Ovary (tissue), 10 donors: ENCODE measurements at regions of chr1 and their contacts with region 1.

Region 1: DNA sequence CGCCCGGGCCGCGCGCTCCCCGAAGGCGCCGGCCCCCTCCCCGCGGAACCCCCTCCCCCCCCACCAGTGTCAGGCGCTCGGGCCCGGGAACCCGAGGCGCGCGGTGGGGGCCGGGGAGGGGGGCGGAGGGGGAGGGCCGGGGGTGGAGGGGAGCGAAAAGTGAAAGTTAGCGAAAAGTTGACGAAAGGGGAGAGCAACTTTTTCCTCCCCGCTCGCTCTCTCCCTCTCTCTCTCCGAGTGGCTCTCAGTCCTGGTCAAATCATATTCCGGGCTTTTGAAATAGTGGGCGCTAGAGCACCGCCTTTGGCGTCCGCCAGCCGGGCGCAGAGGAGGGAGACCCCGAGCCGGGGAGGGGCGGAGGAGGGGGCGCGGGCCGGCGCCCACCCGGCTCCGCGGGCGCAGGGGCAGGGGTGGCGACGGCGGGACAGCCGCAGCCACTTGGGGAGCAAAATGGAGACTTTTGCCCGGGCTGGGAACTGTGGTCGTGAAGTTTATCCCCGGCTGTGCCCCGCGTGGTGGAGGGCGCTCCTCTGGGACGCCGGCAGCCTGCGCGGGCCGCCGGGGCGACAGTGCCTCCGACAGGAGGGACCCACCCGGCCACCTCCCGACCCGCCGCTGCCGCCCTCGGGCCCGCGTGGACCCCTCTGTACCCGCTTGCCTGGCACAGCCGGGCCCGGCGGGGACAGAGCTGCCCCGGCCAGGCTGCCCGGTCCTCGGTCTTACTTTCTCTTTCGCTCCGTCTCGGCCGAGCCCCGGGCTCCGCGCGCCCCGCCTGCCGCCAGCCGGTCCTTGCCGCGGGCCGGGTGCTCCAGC is 694 bp downstream of the PRDM16 start:
- DNase-seq: peak; percentile 72 to 80 (median 76)
- H3K4me3 ChIP-seq: peak overlapping the region; percentile 58
- H3K27ac ChIP-seq: peak overlapping the region; percentile 90 to 98
- H3K4me1 ChIP-seq: peaks cover 8% of the 10 kb centered on the region
- H3K27me3 ChIP-seq: no peaks in the 10 kb centered on the region
- CTCF ChIP-seq: peak; percentile 24 to 49 (median 36)
- EP300 ChIP-seq: no peak
- POLR2A ChIP-seq: no peak

Region 2: DNA sequence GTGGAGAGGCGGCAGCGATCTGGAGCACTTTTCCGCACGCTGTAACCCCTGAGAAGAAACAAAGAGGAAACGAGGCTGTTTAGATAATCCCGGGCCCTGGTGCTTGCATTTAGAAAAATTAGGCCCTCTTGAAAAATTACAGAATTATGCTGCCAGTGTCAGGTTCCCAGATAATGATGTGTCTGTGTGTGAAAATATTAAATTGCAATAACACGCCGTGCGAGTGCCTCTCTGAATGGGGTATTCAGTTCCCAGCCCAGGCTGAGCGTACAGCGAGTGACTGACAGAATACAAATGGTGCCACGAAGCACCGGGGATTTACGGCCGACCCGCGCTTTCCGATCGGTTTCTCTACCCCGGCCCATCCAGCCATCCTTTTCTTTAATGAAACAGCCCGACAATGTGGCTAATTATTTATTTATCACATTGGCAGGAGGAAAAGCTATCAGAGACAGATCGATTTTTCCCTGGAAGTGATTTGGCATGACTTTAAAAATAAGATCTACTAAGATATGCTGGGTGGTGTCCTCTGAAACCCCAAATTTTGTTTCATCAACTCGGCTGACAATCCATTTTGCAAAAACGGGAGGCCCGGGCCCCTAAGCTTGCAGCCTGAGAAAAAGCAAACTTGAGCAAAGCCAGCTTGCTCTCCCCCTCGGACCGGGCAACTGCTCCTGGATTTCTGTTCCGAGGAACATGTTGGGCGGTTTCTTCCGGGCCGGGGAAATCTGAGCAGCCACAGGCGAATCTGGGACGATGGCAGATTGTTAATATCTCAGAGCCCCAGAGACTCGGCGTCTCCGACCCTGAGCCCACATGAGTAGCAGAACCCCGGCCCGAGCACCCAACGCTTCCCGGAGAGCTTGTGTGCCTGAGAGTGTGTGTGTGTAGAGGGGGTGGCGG is 10.6 kb after region 1 on chr1:
- intact Hi-C with region 1: no loop called
- DNase-seq: no peak
- H3K4me3 ChIP-seq: no peak overlapping the region
- H3K27ac ChIP-seq: no peak overlapping the region
- H3K4me1 ChIP-seq: no peaks in the 10 kb centered on the region
- H3K27me3 ChIP-seq: no peaks in the 10 kb centered on the region
- CTCF ChIP-seq: no peak
- EP300 ChIP-seq: no peak
- POLR2A ChIP-seq: no peak

Region 3: DNA sequence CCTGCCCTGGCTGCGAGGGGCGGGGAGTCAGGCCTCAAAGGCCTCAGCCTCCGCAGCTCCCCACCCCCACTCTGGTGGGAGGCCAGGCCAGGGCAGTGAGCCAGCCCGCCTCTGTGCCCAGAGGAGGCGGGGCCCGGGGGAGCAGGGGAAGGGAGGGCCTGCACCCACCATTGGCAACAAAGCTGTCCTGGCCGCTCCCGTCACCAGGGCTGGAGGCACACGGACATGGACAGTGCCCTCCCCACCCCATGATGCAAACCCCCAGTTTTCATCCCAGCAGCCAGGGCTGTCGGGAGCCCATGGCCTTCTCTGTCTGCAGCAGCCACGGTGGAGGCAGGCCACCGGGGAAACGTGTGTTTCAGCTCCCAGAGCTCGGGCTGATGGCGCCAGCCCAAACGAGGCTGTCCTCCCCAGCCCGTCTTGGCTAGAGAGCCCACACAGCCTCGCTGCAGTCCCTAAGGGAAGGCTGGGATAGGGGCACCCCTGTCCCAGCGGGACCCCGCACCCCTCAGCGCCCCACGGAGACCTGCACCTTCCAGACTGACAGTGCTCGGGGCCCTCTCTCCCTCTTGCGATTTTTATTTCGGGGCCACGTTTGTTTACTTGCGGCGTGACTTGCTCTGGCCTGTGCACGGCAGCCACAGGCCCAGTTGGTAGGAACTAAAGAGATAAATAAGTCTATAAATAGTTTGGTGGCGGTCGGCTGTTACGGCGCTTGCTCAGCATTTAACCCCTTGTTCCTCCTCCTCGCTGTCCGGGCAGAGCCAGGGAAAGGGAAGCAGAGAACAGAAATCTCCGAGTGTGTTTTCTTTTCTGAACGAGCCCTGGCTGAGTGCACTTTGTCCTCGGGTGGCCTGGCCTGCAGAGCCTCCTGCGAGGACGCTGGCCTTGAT is 101.1 kb after region 1 on chr1:
- intact Hi-C with region 1: loop called in 1 of 4 experiments (anchors 5 kb)
- DNase-seq: peak; percentile 88 to 94 (median 94)
- H3K4me3 ChIP-seq: peak overlapping the region; percentile 22
- H3K27ac ChIP-seq: peak overlapping the region; percentile 9 to 79
- H3K4me1 ChIP-seq: peaks cover 22% of the 10 kb centered on the region
- H3K27me3 ChIP-seq: no peaks in the 10 kb centered on the region
- CTCF ChIP-seq: peak in 1 of 3 donors; percentile 2
- EP300 ChIP-seq: no peak
- POLR2A ChIP-seq: peak; percentile 10

Region 4: GRCh38 chr1:3222042-3222692 is 152.5 kb after region 1 on chr1:
- intact Hi-C with region 1: loop called in 1 of 4 experiments (anchors 10 kb)
- DNase-seq: peak in 3 of 5 donors; percentile 27 to 50 (median 45)
- H3K4me3 ChIP-seq: no peak overlapping the region
- H3K27ac ChIP-seq: peak overlapping the region in 1 of 2 donors; percentile 48
- H3K4me1 ChIP-seq: peaks cover 18% of the 10 kb centered on the region
- H3K27me3 ChIP-seq: no peaks in the 10 kb centered on the region
- CTCF ChIP-seq: no peak
- EP300 ChIP-seq: no peak
- POLR2A ChIP-seq: no peak

Region 5: GRCh38 chr1:3283849-3284248 is 214.2 kb after region 1 on chr1:
- intact Hi-C with region 1: loop called (anchors 2 to 5 kb)
- DNase-seq: peak; percentile 56 to 77 (median 72)
- H3K4me3 ChIP-seq: no peak overlapping the region
- H3K27ac ChIP-seq: no peak overlapping the region
- H3K4me1 ChIP-seq: peaks cover 5% of the 10 kb centered on the region
- H3K27me3 ChIP-seq: no peaks in the 10 kb centered on the region
- CTCF ChIP-seq: peak; percentile 67 to 76 (median 68)
- EP300 ChIP-seq: no peak
- POLR2A ChIP-seq: no peak

Region 6: DNA sequence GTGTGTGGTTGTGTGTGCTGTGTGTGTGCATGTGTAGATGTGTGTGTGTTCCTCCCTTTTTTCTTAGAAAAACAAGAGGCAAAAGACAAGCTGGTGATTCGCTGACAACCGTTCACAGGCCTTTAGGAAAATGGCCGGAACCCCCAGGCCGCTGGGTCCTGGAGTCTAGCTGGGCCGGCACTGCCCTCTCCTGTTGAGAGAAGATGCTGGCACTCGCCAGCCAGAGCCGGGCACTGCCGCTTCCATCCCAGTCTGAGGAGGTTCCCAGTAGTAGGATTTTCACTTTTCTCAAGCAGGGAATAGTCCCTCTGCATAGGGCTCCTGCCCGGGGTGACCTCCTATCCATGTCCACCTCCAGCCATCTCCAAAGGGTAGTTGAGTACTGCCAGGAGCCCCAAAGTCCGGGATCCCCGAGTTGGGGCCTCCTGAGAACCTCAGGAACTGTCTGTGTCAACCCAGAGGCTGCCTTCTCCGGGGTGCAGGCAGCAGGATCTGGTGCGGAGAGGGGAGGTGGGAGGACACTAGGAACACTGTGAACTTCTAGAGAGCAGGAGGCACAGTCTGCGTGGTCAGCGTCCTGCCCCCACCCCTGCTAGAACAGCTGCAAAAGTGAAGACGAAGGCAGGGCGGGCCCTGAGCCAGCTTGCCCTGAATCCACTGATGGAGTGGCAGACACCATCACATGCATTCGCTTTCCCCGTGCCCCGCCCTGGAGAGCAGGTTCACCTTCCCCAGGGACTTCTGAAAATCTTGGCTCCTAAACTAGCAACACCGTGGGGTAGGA is 340.6 kb after region 1 on chr1:
- intact Hi-C with region 1: loop called in 2 of 4 experiments (anchors 5 kb)
- DNase-seq: peak; percentile 58 to 83 (median 70)
- H3K4me3 ChIP-seq: no peak overlapping the region
- H3K27ac ChIP-seq: no peak overlapping the region
- H3K4me1 ChIP-seq: peaks cover 2% of the 10 kb centered on the region
- H3K27me3 ChIP-seq: no peaks in the 10 kb centered on the region
- CTCF ChIP-seq: peak; percentile 27 to 65 (median 50)
- EP300 ChIP-seq: no peak
- POLR2A ChIP-seq: no peak

Region 7: GRCh38 chr1:5029136-5029535 is 1959.4 kb after region 1 on chr1:
- intact Hi-C with region 1: no loop called
- DNase-seq: no peak
- H3K4me3 ChIP-seq: no peak overlapping the region
- H3K27ac ChIP-seq: no peak overlapping the region
- H3K4me1 ChIP-seq: no peaks in the 10 kb centered on the region
- H3K27me3 ChIP-seq: no peaks in the 10 kb centered on the region
- CTCF ChIP-seq: no peak
- EP300 ChIP-seq: no peak
- POLR2A ChIP-seq: no peak